Right cardiac atrium (tissue), 5 donors: ENCODE measurements at regions of chr4 and their contacts with region 1.

Region 1: DNA sequence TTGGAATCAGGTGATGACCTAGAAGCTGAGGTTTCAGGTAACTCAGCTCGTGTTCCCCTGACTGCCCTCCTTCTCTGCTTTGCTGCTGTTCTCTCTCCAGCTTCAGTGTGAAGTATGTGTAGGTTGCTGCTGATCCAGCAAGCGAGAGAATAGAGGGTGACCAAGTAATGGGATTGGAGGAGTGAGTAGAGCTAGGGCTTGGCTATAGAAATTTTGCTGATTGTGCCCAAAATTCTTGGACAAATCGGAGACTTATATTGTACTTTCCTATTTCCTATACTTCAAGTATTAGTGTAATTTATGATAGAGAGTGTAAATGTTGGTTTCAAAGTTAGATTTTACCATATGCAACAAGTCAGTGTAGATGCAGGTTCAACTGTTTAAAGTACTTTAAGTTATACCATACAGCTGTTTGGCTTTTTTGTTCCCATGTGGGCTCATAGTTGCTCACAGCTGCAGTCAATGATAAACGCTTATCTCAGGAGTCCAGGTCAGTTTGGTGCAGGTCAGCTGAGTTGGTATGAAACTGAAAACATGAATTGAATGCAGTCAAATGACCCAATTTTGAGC is 48.0 kb downstream of the RAPGEF2 start:
- DNase-seq: no peak
- ATAC-seq: no peak
- H3K4me3 ChIP-seq: no peak overlapping the region
- H3K27ac ChIP-seq: no peak overlapping the region
- H3K4me1 ChIP-seq: peaks cover 10% of the 10 kb centered on the region
- H3K27me3 ChIP-seq: no peaks in the 10 kb centered on the region

Region 2: DNA sequence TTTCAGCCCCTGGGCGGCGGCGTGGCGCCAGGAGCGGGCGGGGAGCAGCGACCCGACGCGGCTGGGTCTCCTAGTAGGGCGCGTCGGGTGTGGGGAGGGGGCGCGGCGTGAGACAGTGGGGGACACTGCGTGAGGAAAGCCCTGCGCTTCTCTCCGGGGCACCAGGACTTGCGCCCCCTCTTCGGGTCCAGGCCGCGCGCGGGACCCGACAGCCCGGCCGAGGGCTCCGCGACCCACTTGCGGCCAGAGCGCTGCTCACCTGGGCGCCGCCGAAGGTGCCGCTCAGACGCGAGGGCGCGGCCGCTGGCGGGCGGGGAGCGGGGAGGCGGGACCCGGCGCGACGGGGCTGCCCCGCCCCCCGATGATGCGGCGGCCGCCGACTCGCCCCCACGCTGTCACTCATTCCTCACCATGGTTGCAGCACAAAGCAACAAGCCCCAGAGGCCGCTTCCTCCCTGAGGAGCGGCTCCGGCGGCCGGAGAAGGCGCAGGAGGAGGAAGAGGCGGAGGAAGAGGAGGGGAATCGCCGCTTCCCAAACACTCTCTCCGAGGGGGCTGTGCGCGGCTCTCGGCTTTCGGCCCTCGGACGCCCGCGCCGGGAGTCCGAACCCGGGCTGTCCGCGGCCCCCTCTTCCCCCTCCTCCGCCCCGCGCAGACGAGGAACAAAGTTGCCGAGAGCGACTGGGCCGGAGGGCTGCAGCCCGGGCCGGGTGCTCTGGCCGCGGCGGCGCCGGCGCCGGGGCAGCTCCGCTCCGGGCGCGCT is 48.1 kb before region 1 on chr4 and contains the start of gene RAPGEF2:
- intact Hi-C with region 1: loop called in 1 of 4 experiments (anchors 10 kb)
- DNase-seq: peak; percentile 94 to 97 (median 96)
- ATAC-seq: peak; percentile 96 to 97
- H3K4me3 ChIP-seq: peak within 1 kb of the TSS; percentile 88
- H3K27ac ChIP-seq: peak within 1 kb of the TSS; percentile 81
- H3K4me1 ChIP-seq: peaks cover 2% of the 10 kb centered on the region
- H3K27me3 ChIP-seq: no peaks in the 10 kb centered on the region
- total RNA-seq, gene RAPGEF2: 35.7 to 38.6 (median 38.2) TPM